Mammary epithelial cell (primary cell): ENCODE measurements at regions of chrX and their contacts with region 1.

Region 1: GRCh38 chrX:40468033-40468846 is 112.5 kb upstream of the ATP6AP2 start:
- DNase-seq: peak; percentile 69
- H3K4me3 ChIP-seq: no peak overlapping the region
- H3K27ac ChIP-seq: no peak overlapping the region
- H3K4me1 ChIP-seq: peaks cover 17% of the 10 kb centered on the region
- H3K27me3 ChIP-seq: no peaks in the 10 kb centered on the region
- CTCF ChIP-seq: peak in 1 of 2 donors; percentile 63

Region 2: DNA sequence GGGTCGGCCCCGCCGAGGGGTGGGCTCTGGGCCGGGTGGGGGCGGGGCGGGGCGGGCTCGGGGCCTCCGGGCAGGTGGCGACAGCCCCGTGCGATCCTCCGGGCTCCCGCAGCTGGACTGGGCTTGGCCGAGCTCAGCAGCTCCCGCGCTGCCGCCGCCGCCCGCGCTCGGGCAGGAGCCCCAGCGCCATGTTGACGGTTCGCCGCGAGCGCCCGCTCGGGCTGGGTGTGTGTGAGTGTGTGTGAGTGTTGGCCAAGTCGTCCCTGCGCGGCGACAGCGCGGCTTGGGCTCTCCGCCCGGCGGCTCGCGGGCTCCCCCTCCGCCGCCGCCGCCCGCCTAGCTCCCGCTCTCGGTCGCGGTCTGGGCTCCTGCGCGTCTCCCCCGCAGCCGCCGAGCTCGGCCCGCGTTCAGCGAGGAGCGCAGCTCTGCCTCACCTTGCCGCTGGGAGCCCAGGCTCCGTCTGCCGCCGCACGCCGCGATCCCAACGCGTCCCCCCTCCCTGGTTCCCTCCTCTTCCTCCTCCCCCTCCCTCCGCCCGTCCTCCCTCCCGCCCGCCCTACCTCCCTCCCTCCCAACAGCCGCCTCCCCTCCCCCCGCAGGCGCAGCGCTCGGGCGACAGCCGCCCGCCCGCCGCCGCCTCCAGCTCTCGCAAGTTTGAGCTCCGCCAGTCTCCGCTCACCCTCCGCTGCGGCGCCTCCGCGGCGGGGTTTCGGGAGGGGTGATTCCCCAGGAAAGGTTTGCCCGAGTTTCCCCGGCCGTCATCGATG is 370.6 kb before region 1 on chrX and contains the start of gene BCOR:
- CTCF ChIA-PET with region 1: no interaction called
- dilution Hi-C with region 1: no loop called
- in situ Hi-C with region 1: no loop called
- intact Hi-C with region 1: loop called (anchors 5 kb)
- DNase-seq: peak; percentile 63
- H3K4me3 ChIP-seq: peak within 1 kb of the TSS; percentile 48 to 64 (median 62)
- H3K27ac ChIP-seq: peak within 1 kb of the TSS; percentile 22
- H3K4me1 ChIP-seq: peaks cover 24% of the 10 kb centered on the region
- H3K27me3 ChIP-seq: peaks cover 23% of the 10 kb centered on the region
- CTCF ChIP-seq: no peak
- total RNA-seq, gene BCOR: 7.2 to 9.2 TPM